ENCODE measurements at regions of chr7 and their contacts with region 1.

Region 1: GRCh38 chr7:130896898-130897514 is 163.0 kb upstream of the KLF14 start:
- DNase-seq: peak; percentile 86
- H3K4me3 ChIP-seq: peak overlapping the region in 1 of 2 experiments; percentile 1; a peak in 1 of 4 replicates
- H3K27ac ChIP-seq: peak overlapping the region; percentile 9 to 100; a peak in 3 of 4 replicates
- H3K4me1 ChIP-seq: peaks cover 9 to 68% of the 10 kb centered on the region in 2 experiments
- H3K27me3 ChIP-seq: no peaks in the 10 kb centered on the region
- CTCF ChIP-seq: peak; percentile 90
- EP300 ChIP-seq: no peak
- RAD21 ChIP-seq: peak; percentile 95

Region 2: GRCh38 chr7:130875265-130875741 is 21.7 kb before region 1 on chr7:
- CTCF ChIA-PET with region 1: interaction called, 136 read pairs
- POLR2A ChIA-PET with region 1: no interaction called
- DNase-seq: peak; percentile 71
- H3K4me3 ChIP-seq: no peak overlapping the region
- H3K27ac ChIP-seq: peak overlapping the region; percentile 5 to 100; a peak in 3 of 4 replicates
- H3K4me1 ChIP-seq: peaks cover 7 to 41% of the 10 kb centered on the region in 2 experiments
- H3K27me3 ChIP-seq: no peaks in the 10 kb centered on the region
- CTCF ChIP-seq: peak; percentile 80
- EP300 ChIP-seq: no peak
- RAD21 ChIP-seq: peak; percentile 68

Region 3: GRCh38 chr7:130941322-130942210 is 44.6 kb after region 1 on chr7:
- CTCF ChIA-PET with region 1: interaction called, 22 read pairs
- POLR2A ChIA-PET with region 1: no interaction called
- DNase-seq: no peak
- H3K4me3 ChIP-seq: peak overlapping the region; percentile 42
- H3K27ac ChIP-seq: peak overlapping the region; percentile 52 to 72; a peak in 3 of 4 replicates
- H3K4me1 ChIP-seq: peaks cover 2 to 45% of the 10 kb centered on the region in 2 experiments
- H3K27me3 ChIP-seq: no peaks in the 10 kb centered on the region
- CTCF ChIP-seq: no peak
- EP300 ChIP-seq: no peak
- RAD21 ChIP-seq: no peak

Region 4: DNA sequence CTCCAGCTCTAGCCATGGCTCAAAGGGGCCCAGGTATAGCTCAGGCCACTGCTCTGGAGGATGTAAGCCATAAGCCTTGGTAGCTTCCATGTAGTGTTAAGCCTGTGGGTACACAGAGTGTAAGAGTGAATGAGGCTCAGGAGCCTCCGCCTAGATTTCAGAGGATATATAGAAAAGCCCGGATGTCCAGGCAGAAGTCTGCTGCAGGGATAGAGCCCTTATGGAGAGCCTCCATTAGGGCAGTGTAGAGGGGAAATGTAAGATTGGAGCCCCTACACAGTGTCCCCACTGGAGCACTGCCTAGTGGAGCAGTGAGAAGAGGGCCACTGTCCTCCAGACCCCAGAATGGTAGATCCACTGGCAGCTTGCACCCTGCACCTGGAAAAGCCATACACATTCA is 77.8 kb after region 1 on chr7:
- CTCF ChIA-PET with region 1: interaction called, 39 read pairs
- POLR2A ChIA-PET with region 1: no interaction called
- DNase-seq: no peak
- H3K4me3 ChIP-seq: no peak overlapping the region
- H3K27ac ChIP-seq: no peak overlapping the region
- H3K4me1 ChIP-seq: peaks cover 0 to 23% of the 10 kb centered on the region in 2 experiments; a peak in 2 of 4 replicates
- H3K27me3 ChIP-seq: no peaks in the 10 kb centered on the region
- CTCF ChIP-seq: no peak
- EP300 ChIP-seq: no peak
- RAD21 ChIP-seq: no peak

Region 5: DNA sequence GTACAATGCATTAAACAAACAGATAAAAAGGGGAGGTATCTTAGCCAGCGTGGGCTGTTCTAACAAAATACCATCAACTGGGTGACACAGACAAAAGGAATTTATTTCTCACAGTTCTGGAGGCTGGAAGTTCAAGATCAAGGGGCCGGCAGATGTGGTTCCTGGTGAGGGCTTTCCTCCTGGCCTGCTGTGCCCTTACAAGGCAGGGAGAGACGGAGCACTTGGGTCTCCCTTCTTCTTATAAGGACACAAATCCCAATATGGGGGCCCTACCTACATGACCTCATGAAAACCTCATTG is 118.6 kb after region 1 on chr7:
- CTCF ChIA-PET with region 1: interaction called, 15 read pairs
- POLR2A ChIA-PET with region 1: no interaction called
- DNase-seq: no peak
- H3K4me3 ChIP-seq: no peak overlapping the region
- H3K27ac ChIP-seq: no peak overlapping the region
- H3K4me1 ChIP-seq: peaks cover 25 to 34% of the 10 kb centered on the region in 2 experiments
- H3K27me3 ChIP-seq: no peaks in the 10 kb centered on the region
- CTCF ChIP-seq: no peak
- EP300 ChIP-seq: no peak
- RAD21 ChIP-seq: no peak

Region 6: DNA sequence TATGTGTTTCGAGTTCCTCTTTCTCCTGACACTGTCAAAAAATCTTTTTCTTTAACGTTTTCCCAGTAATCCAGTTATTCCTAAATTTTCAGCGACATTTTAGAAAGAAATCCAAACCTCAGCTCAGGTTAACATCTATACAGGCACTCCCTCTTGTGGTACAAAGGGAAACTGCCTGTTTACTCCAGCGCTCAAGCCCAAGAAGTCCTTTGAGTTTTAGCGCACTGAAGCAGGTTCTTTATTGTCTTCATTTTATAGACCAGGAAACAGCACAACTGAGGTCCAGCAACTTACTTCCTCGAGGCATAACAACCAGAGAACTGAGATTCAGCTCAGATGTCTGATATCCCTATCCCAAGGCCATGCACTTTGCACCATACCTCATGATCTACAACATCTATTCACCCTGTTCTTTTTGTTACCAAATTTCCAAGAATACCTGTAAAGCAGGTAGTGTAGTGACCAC is 143.5 kb after region 1 on chr7:
- CTCF ChIA-PET with region 1: interaction called, 186 read pairs
- POLR2A ChIA-PET with region 1: no interaction called
- DNase-seq: peak; percentile 80
- H3K4me3 ChIP-seq: no peak overlapping the region; a peak in 1 of 4 replicates
- H3K27ac ChIP-seq: peak overlapping the region; percentile 0 to 66; a peak in 2 of 4 replicates
- H3K4me1 ChIP-seq: peaks cover 4 to 16% of the 10 kb centered on the region in 2 experiments; a peak in 3 of 4 replicates
- H3K27me3 ChIP-seq: no peaks in the 10 kb centered on the region
- CTCF ChIP-seq: peak; percentile 100
- EP300 ChIP-seq: no peak
- RAD21 ChIP-seq: peak; percentile 97

Region 7: DNA sequence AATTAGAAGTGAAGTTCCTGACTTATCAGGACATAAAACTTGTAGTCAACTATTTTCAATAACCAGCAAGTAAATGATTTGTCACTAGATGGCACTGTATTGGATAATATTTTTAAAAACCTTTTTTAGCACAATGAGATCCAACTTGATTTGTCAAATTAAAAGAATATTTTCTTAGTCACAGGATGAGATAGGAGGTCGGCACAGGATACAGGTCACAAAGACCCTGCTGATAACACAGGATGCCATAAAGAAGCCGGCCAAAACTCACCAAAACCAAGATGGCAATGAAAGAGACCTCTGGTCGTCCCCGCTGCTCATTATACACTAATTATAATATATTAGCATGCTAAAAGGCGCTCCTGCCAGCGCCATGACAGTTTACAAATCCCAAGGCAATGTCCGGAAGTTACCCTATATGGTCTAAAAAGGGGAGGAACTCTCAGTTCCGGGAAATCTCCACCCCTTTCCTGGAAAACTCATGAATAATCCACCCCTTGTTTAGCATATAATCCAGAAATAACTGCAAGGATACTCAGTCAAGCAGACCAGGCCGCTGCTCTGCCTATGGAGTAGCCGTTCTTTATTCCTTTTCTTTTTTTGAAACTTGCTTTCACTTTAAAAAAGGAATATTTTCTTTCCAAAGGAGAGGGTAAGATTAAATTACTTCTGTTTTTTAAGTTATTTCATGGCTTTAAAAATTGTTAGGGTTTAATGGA is 174.9 kb after region 1 on chr7:
- CTCF ChIA-PET with region 1: interaction called, 28 read pairs
- POLR2A ChIA-PET with region 1: no interaction called
- DNase-seq: peak; percentile 37
- H3K4me3 ChIP-seq: peak overlapping the region; percentile 37 to 38; a peak in 3 of 4 replicates
- H3K27ac ChIP-seq: peak overlapping the region; percentile 89 to 91
- H3K4me1 ChIP-seq: peaks cover 12 to 34% of the 10 kb centered on the region in 2 experiments
- H3K27me3 ChIP-seq: no peaks in the 10 kb centered on the region
- CTCF ChIP-seq: peak; percentile 87
- EP300 ChIP-seq: no peak
- RAD21 ChIP-seq: peak; percentile 45